PC-3 (cell line): ENCODE measurements at regions of chr22 and their contacts with region 1.

Region 1: GRCh38 chr22:31272522-31273446 is 19.5 kb downstream of the PIK3IP1 start:
- DNase-seq: peak; percentile 66
- ATAC-seq: peak; percentile 81
- H3K4me3 ChIP-seq: no peak overlapping the region
- H3K27ac ChIP-seq: no peak overlapping the region
- H3K4me1 ChIP-seq: no peaks in the 10 kb centered on the region
- H3K27me3 ChIP-seq: no peaks in the 10 kb centered on the region
- CTCF ChIP-seq: peak; percentile 73

Region 2: DNA sequence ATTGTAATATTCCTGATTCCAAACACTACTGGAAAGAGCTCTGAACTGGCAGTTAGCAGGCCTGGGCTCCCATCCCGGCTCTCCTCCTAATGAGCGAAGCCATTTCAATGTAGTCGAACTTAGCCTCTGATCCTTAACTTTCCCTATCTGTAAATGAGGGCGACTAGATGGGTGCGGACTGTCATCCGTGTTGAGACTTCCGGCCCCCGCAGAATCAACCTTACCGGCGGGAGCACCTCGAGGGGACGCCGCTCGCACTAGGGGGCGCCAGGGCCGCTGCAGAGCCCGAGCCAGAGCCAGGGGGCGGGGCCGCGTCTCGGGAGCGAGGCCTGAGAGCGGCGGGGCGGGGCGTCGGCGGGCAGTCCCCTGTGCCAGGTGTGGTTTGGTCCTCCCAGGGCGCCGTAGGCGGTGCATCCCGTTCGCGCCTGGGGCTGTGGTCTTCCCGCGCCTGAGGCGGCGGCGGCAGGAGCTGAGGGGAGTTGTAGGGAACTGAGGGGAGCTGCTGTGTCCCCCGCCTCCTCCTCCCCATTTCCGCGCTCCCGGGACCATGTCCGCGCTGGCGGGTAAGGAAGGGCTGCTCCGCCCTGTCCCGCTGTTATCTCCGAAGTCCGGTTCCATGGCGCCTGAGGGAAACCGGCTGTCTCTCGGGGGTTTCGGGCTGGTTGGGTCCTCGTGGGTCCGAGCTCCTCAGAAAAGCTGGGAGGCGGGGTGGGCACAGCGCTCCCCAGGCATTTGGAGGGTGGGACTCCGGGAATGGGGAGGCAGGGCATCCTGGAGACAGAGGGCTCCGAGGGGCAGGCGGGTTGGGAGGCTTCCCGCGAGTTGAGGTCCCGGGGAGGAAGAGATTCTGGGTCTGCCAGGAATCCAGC is 60.7 kb before region 1 on chr22 and contains the start of gene LIMK2:
- CTCF ChIA-PET with region 1: interaction called, 3 read pairs
- POLR2A ChIA-PET with region 1: no interaction called
- intact Hi-C with region 1: loop called (anchors 10 kb)
- DNase-seq: peak; percentile 83
- ATAC-seq: peak; percentile 85
- H3K4me3 ChIP-seq: peak within 1 kb of the TSS; percentile 89
- H3K27ac ChIP-seq: no peak within 1 kb of the TSS
- H3K4me1 ChIP-seq: peaks cover 13% of the 10 kb centered on the region
- H3K27me3 ChIP-seq: no peaks in the 10 kb centered on the region
- CTCF ChIP-seq: peak; percentile 78
- total RNA-seq, gene LIMK2: 13.2 and 17.2 TPM in 2 replicates

Region 3: DNA sequence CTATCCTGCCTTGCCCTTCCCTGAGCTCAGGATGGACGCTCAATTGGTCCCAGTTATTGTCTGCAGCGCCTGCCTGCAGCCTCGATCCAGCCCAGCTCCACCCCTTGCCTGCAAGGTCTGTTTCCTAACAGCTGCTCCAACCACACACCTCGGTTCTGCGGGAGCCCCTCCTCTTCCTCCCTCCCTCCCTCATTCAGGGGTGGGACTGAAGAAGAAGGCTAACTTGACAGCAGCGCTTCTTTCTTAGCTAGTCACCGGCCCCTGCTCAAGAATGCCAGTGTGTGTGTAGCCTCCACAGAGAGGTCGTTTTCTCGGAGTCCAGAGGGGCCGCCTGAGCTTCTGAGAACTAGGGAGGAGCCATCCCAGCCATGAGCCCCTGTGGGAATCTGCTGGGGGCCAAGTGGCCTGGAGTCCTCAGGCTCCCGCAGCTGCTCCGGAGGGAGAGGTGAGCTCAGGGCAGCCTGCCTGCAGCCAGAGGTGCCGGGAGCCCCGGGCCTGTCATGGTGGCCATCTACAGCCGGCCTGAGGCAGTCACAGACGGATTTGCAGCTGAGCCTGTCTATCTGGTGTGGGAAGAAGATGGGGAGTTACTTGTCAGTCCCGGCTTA is 24.5 kb before region 1 on chr22:
- CTCF ChIA-PET with region 1: interaction called, 6 read pairs
- POLR2A ChIA-PET with region 1: no interaction called
- intact Hi-C with region 1: loop called (anchors 2 kb)
- DNase-seq: peak; percentile 52
- ATAC-seq: peak; percentile 82
- H3K4me3 ChIP-seq: peak overlapping the region; percentile 55
- H3K27ac ChIP-seq: no peak overlapping the region
- H3K4me1 ChIP-seq: peaks cover 15% of the 10 kb centered on the region
- H3K27me3 ChIP-seq: no peaks in the 10 kb centered on the region
- CTCF ChIP-seq: no peak